RWPE1 (cell line): ENCODE measurements at regions of chr6 and their contacts with region 1.

Region 1: DNA sequence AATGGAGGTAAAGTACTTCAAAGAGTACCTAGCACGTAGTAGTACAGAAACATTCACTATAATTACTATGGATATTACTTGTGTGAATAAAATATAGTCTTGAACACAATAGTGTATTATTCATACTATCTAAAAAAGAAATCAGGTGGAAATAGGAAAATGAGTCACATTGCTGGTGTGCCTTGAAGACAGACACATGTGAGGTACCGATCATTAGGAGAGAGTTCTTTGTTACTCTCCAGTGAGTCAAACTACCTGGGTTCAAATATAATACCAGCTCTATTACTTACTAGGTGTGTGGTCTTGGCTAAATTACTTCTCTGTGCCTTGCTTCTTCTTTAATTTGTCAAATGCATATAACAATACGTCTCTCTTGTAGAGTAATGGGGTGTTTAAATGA is 50.8 kb upstream of the BEND6 start:
- DNase-seq: no peak
- H3K27ac ChIP-seq: no peak overlapping the region
- CTCF ChIP-seq: no peak

Region 2: DNA sequence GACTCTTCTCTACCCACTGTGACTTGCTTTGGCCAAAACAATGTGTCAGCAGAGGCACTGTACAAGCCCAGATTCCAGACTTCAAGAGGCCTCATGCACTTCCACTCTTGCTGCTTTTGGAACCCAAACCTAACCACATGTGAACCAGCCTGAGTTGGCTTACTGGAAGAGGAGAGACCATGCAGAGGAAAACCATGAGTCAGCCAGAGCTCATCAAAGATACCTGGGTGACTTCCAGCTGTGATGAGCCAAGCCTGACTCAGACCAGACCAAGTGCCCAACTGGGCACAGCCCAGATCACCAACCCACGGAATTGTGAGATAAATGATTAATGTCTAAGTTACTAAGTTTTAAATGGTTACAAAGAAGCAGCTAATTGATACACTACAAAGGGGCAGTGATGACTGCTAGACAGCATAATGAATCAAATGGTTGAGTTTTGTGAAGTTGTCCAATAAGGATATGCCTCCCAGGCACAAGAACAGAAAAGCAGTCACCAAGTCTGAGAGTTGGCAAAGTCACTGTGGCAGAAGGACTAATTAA is 34.7 kb after region 1 on chr6:
- CTCF ChIA-PET with region 1: interaction called, 10 read pairs
- POLR2A ChIA-PET with region 1: no interaction called
- DNase-seq: peak; percentile 94
- H3K27ac ChIP-seq: peak overlapping the region; percentile 68
- CTCF ChIP-seq: no peak

Region 3: DNA sequence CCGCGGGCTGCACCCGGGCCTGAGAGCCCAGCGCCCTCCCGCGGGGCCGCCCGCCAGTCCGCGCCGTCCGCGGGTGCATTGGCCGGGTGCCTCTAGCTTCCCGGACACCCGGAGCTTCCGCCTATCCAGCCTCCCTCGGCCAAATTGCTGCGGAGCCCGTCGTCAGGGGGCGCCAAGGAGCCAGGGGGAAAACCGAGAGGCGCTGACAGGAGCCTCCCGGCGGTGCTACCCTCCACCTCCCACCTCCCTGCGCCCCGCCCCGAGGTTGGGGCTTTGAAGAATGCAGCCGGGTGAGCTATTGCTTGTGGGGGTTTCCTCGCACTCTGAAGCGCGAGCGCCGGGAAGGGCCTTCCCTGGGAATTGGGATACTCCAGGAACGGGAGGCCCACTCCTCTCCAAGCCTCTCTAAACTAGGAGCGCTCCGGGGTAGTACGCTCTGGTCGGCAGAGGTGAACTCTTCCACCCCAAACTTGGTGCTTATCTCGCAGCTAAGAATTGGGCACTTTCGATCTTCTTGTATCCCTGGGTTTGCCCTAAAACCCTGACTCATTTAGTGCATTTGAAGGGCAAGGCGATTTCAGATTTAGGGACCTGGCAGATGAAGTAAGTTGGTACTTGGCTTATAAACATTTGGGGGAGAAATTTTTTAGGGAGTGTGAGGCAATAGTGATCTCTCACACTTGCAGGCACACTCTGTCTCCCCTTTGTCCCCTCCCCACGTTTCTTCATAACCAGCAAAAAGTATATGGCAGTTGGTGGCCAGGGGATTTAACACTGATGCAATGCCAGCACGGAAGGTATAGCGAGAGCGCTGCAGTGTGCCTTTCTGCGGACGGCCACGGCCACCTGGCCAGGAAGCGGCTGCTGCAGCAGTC is 51.3 kb after region 1 on chr6:
- CTCF ChIA-PET with region 1: interaction called, 14 read pairs
- POLR2A ChIA-PET with region 1: no interaction called
- DNase-seq: peak; percentile 73
- H3K27ac ChIP-seq: peak overlapping the region; percentile 84
- CTCF ChIP-seq: peak; percentile 82

Region 4: DNA sequence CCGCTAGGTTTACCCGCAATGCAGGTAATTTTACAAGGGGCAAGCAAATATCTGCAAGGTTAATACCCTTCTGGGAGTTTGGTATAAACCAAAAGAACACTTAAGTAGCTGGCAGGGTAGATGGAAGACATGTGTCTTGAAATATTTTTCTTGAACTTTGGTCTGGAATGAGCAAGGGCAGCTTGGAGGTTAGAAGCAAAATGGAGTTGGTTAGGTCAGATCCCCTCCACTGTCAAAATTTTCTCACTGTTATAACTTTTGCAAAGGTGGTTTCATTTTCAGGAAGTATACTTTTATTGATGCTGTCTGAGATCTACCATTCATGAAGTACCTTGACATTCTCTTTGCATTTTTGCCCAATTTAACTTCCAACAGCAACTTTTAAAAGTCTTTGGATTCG is 129.2 kb after region 1 on chr6:
- CTCF ChIA-PET with region 1: no interaction called
- POLR2A ChIA-PET with region 1: no interaction called
- DNase-seq: no peak
- H3K27ac ChIP-seq: no peak overlapping the region
- CTCF ChIP-seq: no peak